Thyroid gland (tissue), 4 donors: ENCODE measurements at regions of chr14 and their contacts with region 1.

Region 1: DNA sequence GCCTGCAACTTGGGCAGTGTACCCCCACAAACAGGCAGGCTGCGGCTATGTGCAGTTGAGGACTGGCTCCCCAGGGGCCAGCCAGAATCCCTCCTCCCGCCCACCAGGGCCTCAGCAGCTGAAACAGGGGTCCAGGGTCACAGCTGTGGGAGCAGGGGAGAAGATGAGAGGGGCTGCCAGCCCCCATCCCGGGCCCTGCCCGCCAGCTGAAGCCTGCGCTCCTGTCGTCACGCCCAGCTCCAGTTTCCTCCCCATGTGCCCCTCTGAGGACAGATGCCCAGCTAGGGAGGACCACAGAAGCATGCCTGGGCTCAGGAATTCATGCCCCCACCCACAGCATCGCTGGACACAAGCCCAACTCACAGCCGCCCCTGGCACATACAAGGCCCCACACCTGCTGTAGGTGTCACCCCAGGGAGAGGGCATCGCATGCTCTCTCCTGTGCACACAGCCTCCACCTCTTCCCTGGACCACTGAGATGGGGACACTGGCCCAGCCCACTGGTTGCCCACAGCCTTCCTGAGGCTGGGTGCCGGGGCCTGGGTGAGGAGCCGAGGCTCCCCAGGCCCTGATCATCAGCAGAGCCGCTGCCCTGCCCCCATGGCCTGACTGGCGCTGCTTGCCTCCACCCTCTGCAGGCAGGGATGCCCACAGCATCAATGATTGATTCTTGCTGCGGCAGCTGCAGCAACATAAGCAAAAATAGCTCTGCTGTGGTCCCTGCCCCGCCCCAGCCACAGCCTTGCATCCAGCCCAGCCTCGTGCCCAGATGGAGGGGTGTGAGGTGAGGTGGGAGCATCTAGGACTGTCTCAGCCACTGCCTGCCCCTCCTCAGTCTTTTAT is 3.7 kb upstream of the CLBA1 start:
- DNase-seq: no peak
- H3K4me3 ChIP-seq: no peak overlapping the region
- H3K27ac ChIP-seq: no peak overlapping the region
- H3K4me1 ChIP-seq: peaks cover 14 to 49% of the 10 kb centered on the region in 2 donors
- H3K27me3 ChIP-seq: no peaks in the 10 kb centered on the region
- CTCF ChIP-seq: no peak
- POLR2A ChIP-seq: no peak

Region 2: GRCh38 chr14:104882325-104883115 is 99.4 kb before region 1 on chr14:
- intact Hi-C with region 1: no loop called
- DNase-seq: peak; percentile 48 to 59
- H3K4me3 ChIP-seq: no peak overlapping the region
- H3K27ac ChIP-seq: no peak overlapping the region
- H3K4me1 ChIP-seq: no peaks in the 10 kb centered on the region
- H3K27me3 ChIP-seq: no peaks in the 10 kb centered on the region
- CTCF ChIP-seq: no peak
- POLR2A ChIP-seq: no peak

Region 3: GRCh38 chr14:105021656-105022275 is 39.8 kb after region 1 on chr14:
- intact Hi-C with region 1: loop called (anchors 2 kb)
- DNase-seq: peak; percentile 27 to 50
- H3K4me3 ChIP-seq: peak overlapping the region; percentile 56 to 86 (median 62)
- H3K27ac ChIP-seq: peak overlapping the region in 2 of 3 donors; percentile 62 to 76
- H3K4me1 ChIP-seq: peaks cover 18 to 19% of the 10 kb centered on the region in 2 donors
- H3K27me3 ChIP-seq: no peaks in the 10 kb centered on the region
- CTCF ChIP-seq: no peak
- POLR2A ChIP-seq: no peak